HepG2 (cell line): ENCODE measurements at regions of chr3 and their contacts with region 1.

Region 1: DNA sequence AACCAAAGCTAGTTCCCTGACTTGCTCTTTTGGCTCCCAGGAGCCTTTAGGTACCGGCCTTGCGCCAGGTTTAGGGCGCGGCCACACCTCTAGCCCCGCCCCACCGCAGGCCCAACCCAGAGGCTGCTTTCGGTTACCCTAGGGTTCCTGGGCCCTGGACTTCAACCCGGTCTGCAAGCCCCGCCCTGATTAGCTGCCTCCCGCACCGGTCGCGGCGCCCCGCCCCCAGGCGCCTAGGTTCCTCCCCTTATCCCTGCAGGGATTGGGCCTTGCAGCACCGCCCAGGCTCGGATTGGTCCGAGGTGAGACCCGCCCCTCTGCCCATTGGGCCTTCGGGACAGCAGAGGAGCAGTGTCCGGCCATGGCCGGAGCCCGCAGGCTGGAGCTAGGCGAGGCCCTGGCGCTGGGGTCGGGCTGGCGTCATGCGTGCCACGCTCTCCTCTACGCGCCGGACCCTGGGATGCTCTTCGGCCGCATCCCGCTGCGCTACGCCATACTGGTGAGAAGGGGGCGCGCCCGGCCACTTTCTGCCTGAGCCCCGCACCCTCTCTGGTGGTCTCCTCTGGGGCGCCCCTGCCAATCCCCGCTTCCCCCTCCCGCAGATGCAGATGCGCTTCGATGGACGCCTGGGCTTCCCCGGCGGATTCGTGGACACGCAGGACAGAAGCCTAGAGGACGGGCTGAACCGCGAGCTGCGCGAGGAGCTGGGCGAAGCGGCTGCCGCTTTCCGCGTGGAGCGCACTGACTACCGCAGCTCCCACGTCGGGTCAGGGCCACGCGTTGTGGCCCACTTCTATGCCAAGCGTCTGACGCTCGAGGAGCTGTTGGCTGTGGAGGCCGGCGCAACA is at the start of gene NUDT16:
- DNase-seq: peak; percentile 97
- ATAC-seq: peak; percentile 99
- H3K4me3 ChIP-seq: peak within 1 kb of the TSS; percentile 69 to 89 (median 82)
- H3K27ac ChIP-seq: peak within 1 kb of the TSS; percentile 76
- H3K4me1 ChIP-seq: peaks cover 27% of the 10 kb centered on the region
- H3K27me3 ChIP-seq: no peaks in the 10 kb centered on the region; a peak in 1 of 5 replicates
- CTCF ChIP-seq: no peak
- EP300 ChIP-seq: no peak
- POLR2A ChIP-seq: peak; percentile 89 to 95
- RAD21 ChIP-seq: peak; percentile 40; the same call in 1 of the 2 replicates
- total RNA-seq, gene NUDT16: 13.7 and 14.8 TPM in 2 replicates

Region 2: GRCh38 chr3:131026321-131027178 is 355.1 kb before region 1 on chr3 and contains the starts of genes ASTE1 and NEK11:
- CTCF ChIA-PET with region 1: no interaction called
- POLR2A ChIA-PET with region 1: interaction called, 13 read pairs
- in situ Hi-C with region 1: no loop called
- intact Hi-C with region 1: loop called (anchors 10 kb)
- DNase-seq: peak; percentile 70
- ATAC-seq: peak; percentile 99
- H3K4me3 ChIP-seq: peak within 1 kb of the TSS; percentile 67 to 86 (median 81)
- H3K27ac ChIP-seq: peak within 1 kb of the TSS; percentile 82
- H3K4me1 ChIP-seq: peaks cover 20% of the 10 kb centered on the region
- H3K27me3 ChIP-seq: no peaks in the 10 kb centered on the region
- CTCF ChIP-seq: peak; percentile 15; the same call in 1 of the 2 replicates
- EP300 ChIP-seq: no peak
- POLR2A ChIP-seq: peak; percentile 78 to 86
- RAD21 ChIP-seq: no peak
- total RNA-seq, gene ASTE1: 7.9 and 10.5 TPM in 2 replicates
- total RNA-seq, gene NEK11: 2.2 and 2.4 TPM in 2 replicates

Region 3: GRCh38 chr3:131033480-131034080 is 348.1 kb before region 1 on chr3:
- CTCF ChIA-PET with region 1: no interaction called
- POLR2A ChIA-PET with region 1: no interaction called
- in situ Hi-C with region 1: no loop called
- intact Hi-C with region 1: loop called (anchors 10 kb)
- DNase-seq: peak; percentile 43
- ATAC-seq: peak; percentile 55; the same call in 2 of the 3 replicates
- H3K4me3 ChIP-seq: no peak overlapping the region
- H3K27ac ChIP-seq: no peak overlapping the region
- H3K4me1 ChIP-seq: no peaks in the 10 kb centered on the region
- H3K27me3 ChIP-seq: no peaks in the 10 kb centered on the region
- CTCF ChIP-seq: peak; percentile 67
- EP300 ChIP-seq: no peak
- POLR2A ChIP-seq: no peak
- RAD21 ChIP-seq: no peak

Region 4: DNA sequence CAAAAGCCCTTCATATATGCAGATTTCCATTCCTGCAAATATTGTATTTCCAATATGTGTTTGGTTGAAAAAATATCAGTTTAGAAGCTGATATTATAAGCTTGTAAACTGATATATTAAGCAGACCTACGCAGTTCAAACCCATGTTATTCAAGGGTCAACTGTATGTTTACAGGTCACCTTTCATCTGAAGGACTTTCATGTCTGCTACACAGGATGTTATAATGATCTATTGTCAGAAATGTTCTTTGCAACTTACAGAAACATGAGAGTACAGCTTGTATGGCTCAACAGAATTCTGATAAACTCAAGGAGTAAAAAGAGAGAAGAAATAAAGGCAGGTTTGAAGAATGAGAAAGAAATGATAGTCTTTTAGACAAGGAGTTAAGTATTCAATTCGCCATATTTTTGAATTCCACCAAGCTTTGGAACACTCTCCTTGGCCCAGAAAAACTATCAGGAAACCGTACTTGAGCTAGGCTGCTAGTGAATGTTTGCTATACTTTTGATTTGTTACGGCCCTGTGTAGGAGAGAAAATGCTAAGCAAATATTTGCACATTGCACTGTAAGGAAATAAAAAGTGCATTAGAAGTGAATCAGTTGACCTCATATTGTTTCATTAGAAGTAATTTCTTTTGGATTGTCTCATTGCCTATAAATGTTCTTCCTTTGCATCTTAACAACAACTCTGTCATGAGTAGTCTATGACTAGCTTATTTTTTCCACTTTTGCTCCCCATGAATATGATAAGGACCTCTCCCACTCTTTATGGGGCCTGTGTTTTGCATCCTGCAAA is 273.8 kb before region 1 on chr3:
- CTCF ChIA-PET with region 1: no interaction called
- POLR2A ChIA-PET with region 1: interaction called, 4 read pairs
- in situ Hi-C with region 1: no loop called
- intact Hi-C with region 1: loop called (anchors 5 kb)
- DNase-seq: peak; percentile 60
- ATAC-seq: peak; percentile 78
- H3K4me3 ChIP-seq: peak overlapping the region in 2 of 3 experiments; percentile 6 to 9; a peak in 1 of 6 replicates
- H3K27ac ChIP-seq: peak overlapping the region; percentile 30
- H3K4me1 ChIP-seq: peaks cover 20% of the 10 kb centered on the region
- H3K27me3 ChIP-seq: no peaks in the 10 kb centered on the region; a peak in 1 of 5 replicates
- CTCF ChIP-seq: no peak
- EP300 ChIP-seq: peak in 1 of 2 experiments; percentile 47; a peak in 1 of 4 replicates
- POLR2A ChIP-seq: no peak
- RAD21 ChIP-seq: no peak

Region 5: DNA sequence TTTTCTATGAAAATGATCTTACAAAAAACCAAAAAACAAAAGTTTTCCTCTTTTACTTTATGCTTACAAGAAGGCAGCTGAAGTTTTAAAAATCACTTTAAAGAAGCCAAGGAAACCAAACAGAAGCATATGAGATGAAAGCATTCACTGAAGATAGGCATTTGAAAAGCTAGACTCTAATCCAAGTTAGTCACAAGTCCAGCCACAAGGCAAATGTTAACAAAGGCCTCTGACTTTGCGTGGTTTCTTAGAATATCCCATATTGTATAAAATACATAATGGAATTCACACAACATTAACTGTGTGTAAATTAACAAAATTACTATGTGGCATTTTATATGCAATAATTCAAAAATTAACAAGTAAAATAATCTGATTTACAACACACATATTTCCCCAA is 103.5 kb after region 1 on chr3:
- CTCF ChIA-PET with region 1: no interaction called
- POLR2A ChIA-PET with region 1: no interaction called
- in situ Hi-C with region 1: no loop called
- intact Hi-C with region 1: loop called (anchors 5 kb)
- DNase-seq: no peak
- ATAC-seq: no peak
- H3K4me3 ChIP-seq: no peak overlapping the region
- H3K27ac ChIP-seq: no peak overlapping the region
- H3K4me1 ChIP-seq: no peaks in the 10 kb centered on the region
- H3K27me3 ChIP-seq: no peaks in the 10 kb centered on the region
- CTCF ChIP-seq: no peak
- EP300 ChIP-seq: no peak
- POLR2A ChIP-seq: no peak
- RAD21 ChIP-seq: no peak

Region 6: GRCh38 chr3:131502530-131503245 is 121.0 kb after region 1 on chr3 and contains the start of gene MRPL3:
- CTCF ChIA-PET with region 1: no interaction called
- POLR2A ChIA-PET with region 1: interaction called, 3 read pairs
- in situ Hi-C with region 1: no loop called
- intact Hi-C with region 1: loop called (anchors 5 kb)
- DNase-seq: peak; percentile 83
- ATAC-seq: peak; percentile 96
- H3K4me3 ChIP-seq: peak within 1 kb of the TSS; percentile 71 to 92 (median 91)
- H3K27ac ChIP-seq: peak within 1 kb of the TSS; percentile 86
- H3K4me1 ChIP-seq: peaks cover 19% of the 10 kb centered on the region
- H3K27me3 ChIP-seq: peaks cover 0 to 10% of the 10 kb centered on the region in 2 experiments; a peak in 2 of 5 replicates
- CTCF ChIP-seq: peak; percentile 22; the same call in 1 of the 2 replicates
- EP300 ChIP-seq: 0 out of 4 replicates have a peak, but pooled peaks of 1 of the 2 experiments have one; percentile 31
- POLR2A ChIP-seq: peak; percentile 70 to 78
- RAD21 ChIP-seq: no peak
- total RNA-seq, gene MRPL3: 172 and 263 TPM in 2 replicates